Breast epithelium (tissue), 4 donors: ENCODE measurements at regions of chr7 and their contacts with region 1.

Region 1: GRCh38 chr7:25259587-25260243 is 31.4 kb upstream of the NPVF start:
- DNase-seq: peak; percentile 43 to 53
- H3K4me3 ChIP-seq: no peak overlapping the region
- H3K27ac ChIP-seq: no peak overlapping the region
- H3K4me1 ChIP-seq: no peaks in the 10 kb centered on the region
- H3K27me3 ChIP-seq: no peaks in the 10 kb centered on the region
- CTCF ChIP-seq: peak; percentile 71 to 87 (median 85)
- POLR2A ChIP-seq: no peak

Region 2: DNA sequence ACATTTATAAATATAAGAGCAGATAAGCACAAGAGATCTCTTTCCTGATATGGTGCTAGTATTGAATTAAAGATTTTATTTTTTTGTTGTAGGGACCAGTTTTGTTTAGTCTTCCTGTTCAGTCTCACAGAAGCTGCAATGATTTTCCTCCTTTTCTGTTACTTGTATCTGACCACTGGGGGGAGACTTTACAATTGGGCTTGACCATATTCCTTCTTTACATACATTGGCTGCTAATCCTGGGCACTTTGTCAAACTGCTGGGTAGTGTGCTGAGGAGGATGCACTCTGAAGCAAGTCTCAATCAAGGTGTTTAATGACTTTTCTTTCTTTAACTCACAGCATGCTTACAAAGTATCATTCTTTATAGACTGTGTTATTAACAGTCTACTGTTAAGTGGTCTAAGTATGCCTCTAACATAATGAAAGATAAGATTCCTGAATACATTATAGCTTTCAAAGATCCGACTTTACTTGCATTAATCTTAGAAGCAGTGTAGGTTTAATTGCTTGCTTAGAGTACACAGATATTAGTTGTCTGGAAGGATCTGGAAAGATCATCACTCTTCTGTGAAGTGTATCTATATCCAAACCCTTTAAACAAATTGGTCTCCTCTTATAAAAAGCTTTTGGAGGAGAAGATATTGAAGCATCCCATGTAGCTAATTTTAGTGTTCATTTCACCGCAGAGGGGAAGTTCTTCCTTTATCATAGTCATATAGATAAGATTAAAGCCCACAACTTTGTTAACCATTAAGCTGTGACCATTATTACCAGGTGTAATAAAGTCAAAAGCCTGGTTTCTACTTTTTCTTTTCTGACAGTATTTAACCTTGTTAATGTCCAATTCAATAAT is 683.3 kb before region 1 on chr7:
- intact Hi-C with region 1: no loop called
- DNase-seq: no peak
- H3K4me3 ChIP-seq: no peak overlapping the region
- H3K27ac ChIP-seq: no peak overlapping the region
- H3K4me1 ChIP-seq: no peaks in the 10 kb centered on the region
- H3K27me3 ChIP-seq: no peaks in the 10 kb centered on the region
- CTCF ChIP-seq: peak in 2 of 3 donors; percentile 33 to 52
- POLR2A ChIP-seq: no peak

Region 3: DNA sequence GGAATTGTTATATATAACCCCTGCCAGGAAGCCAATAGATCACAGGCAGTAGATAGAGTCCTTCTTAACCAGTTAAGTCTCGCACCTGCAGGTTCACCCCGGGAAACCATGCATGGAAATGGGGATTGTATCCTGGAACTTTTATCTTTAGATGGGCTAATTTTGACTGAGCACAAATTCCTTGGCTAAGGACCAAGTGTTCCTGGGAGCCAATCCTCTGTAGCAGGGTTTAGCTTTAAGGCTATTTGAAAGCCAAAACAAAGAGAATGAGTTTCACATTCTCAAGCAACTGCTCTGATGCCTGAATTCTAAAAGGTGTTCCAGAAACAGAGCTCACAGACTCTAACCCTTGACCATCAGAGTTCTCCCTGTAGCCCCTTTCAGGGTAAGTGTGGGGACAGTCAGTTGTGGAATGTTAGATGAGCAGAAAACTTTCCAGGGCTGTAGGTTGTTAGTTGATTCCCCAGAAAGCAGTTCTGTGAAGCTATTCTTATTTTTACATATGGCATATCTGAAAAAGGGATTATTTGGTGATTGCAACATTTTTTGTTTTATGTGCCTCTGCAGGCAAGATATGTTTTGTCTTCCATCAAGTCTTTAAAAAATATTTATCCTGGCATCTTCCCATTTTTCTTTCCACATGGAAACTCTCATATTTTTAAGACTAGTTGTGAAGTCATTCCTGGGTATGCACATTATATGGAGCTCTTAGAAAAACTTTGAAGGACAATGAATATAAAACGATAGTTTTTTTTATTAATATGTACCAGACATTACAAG is 15.3 kb before region 1 on chr7:
- intact Hi-C with region 1: no loop called
- DNase-seq: no peak
- H3K4me3 ChIP-seq: no peak overlapping the region
- H3K27ac ChIP-seq: no peak overlapping the region
- H3K4me1 ChIP-seq: no peaks in the 10 kb centered on the region
- H3K27me3 ChIP-seq: no peaks in the 10 kb centered on the region
- CTCF ChIP-seq: no peak
- POLR2A ChIP-seq: no peak

Region 4: GRCh38 chr7:25389489-25390106 is 129.9 kb after region 1 on chr7:
- intact Hi-C with region 1: loop called (anchors 10 kb)
- DNase-seq: no peak
- H3K4me3 ChIP-seq: no peak overlapping the region
- H3K27ac ChIP-seq: no peak overlapping the region
- H3K4me1 ChIP-seq: peaks cover 7 to 11% of the 10 kb centered on the region in 2 donors
- H3K27me3 ChIP-seq: peaks cover 0 to 7% of the 10 kb centered on the region in 2 donors
- CTCF ChIP-seq: peak; percentile 59 to 62 (median 60)
- POLR2A ChIP-seq: no peak

Region 5: GRCh38 chr7:25565949-25566348 is 306.2 kb after region 1 on chr7:
- intact Hi-C with region 1: loop called (anchors 10 kb)
- DNase-seq: peak in 1 of 2 donors; percentile 39
- H3K4me3 ChIP-seq: no peak overlapping the region
- H3K27ac ChIP-seq: no peak overlapping the region
- H3K4me1 ChIP-seq: no peaks in the 10 kb centered on the region
- H3K27me3 ChIP-seq: no peaks in the 10 kb centered on the region
- CTCF ChIP-seq: peak; percentile 99 to 100 (median 100)
- POLR2A ChIP-seq: no peak